Aorta (tissue), 5 donors: ENCODE measurements at regions of chr19 and their contacts with region 1.

Region 1: GRCh38 chr19:51703575-51704515 is 10.7 kb downstream of the SPACA6 start:
- DNase-seq: peak; percentile 98 to 100
- ATAC-seq: peak; percentile 96
- H3K4me3 ChIP-seq: peak overlapping the region; percentile 6 to 28
- H3K27ac ChIP-seq: peak overlapping the region in 1 of 2 donors; percentile 69
- H3K4me1 ChIP-seq: no peaks in the 10 kb centered on the region
- H3K27me3 ChIP-seq: no peaks in the 10 kb centered on the region

Region 2: DNA sequence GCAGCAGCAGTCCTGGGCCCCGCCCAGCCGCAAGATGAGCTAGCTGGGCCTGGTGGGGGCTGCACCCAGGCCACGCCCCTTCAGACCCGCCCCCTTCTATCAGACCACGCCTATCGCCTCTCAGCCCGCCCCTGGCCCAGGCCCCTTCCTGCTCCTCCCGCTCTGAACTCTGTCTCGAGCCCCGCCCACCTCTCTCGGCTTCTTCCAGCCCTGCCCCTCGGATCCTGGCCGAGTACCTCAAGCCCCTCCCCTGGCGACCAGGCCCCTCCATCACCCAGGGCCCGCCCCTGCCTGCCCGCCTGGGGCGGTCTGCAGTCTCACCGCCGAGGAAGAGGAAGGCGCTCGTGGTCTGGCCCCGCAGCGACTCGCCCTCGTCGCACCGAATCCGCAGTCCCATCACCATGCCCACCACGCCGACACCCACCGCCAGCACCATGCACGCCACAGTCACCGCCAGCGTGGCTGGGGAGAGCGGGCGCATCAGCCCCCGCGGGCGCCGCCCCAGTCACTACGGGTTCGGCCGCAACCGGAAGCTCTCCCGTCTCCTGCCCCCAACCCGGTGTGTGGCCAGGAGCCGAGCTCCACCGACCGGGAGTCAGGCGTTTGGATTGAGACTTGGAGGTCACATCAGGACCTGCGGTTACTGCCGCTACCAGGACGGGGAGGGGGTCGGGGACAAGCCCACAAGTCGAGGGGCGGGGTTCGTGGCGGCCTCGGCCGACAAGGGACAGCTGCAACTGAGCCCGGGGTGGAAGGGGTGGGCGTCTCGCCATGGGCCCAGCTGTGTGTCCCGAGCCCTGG is 336.1 kb before region 1 on chr19:
- intact Hi-C with region 1: loop called in 1 of 2 experiments (anchors 5 kb)
- DNase-seq: peak; percentile 100
- ATAC-seq: peak; percentile 96
- H3K4me3 ChIP-seq: peak overlapping the region; percentile 4 to 65
- H3K27ac ChIP-seq: peak overlapping the region in 1 of 2 donors; percentile 4
- H3K4me1 ChIP-seq: no peaks in the 10 kb centered on the region
- H3K27me3 ChIP-seq: no peaks in the 10 kb centered on the region

Region 3: DNA sequence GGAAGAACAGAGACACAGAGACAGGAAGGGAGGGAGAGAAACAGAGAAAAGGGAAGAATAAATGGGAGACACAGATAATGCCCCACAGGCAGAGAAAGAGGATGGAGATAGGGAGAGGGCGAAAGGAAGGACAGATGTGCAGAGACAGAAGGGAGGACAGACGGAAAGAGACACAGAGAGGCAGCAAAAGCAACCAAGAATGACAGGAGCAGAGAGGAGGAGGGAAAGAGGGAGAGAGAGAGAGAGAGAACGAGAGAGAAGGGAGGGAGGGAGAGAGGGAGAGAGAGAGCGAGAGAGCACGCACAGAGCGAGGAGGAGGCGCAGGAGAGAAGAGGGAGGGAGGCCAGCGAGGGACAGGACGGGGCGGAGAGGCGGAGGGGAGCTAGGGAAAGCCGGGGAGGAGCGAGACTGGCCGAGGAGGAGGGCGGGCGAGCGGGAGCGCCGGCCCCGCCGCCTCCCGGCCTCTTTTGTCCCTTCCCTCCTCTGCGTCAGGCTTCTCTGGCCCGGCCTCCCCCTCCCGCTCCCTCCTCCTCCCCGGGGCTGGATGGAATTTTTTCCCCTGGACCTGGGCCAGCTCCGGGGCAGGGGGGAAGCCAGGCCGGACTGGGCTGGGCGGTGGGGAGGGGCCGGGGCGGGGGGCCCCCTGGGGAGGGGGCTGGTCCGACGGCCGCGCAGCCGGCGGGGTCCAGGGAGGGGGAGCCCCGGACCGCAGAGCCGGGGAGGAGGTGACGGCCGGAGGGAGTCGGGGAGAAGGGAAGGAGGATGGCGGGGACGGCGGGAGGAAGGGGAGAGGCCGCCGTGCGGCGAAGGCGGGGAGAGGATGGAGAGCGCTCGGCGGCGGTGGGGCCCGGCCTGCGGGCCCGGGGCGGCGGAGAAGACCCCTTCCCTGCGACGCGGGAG is 14.9 kb before region 1 on chr19:
- intact Hi-C with region 1: loop called in 1 of 2 experiments (anchors 1 kb)
- DNase-seq: peak; percentile 94 to 98
- ATAC-seq: peak; percentile 95
- H3K4me3 ChIP-seq: peak overlapping the region; percentile 55 to 86
- H3K27ac ChIP-seq: peak overlapping the region; percentile 79 to 84
- H3K4me1 ChIP-seq: no peaks in the 10 kb centered on the region
- H3K27me3 ChIP-seq: no peaks in the 10 kb centered on the region